ENCODE measurements at regions of chr1 and their contacts with region 1.

Region 1: DNA sequence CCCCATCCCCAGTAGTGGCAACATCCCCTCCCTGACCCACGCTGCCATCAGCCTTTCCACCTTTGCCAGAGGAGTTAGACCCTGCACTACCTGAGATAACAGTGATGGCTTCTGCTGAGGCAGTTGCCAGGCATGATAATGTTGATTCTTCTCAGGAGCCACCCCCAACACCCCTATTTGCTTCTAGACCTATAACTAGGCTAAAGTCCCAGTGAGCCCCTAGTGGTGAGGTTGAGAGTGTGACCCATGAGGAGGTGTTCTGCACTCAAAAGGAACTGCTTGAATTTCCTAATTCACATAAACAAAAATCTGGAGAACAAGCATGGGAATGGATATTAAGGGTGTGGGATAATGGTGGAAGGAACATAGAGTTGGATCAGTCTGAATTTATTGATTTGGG is 159.6 kb upstream of the COL11A1 start:
- DNase-seq: no peak
- H3K4me3 ChIP-seq: no peak overlapping the region
- H3K27ac ChIP-seq: no peak overlapping the region
- H3K4me1 ChIP-seq: peaks cover 0 to under 1% (median 0%) of the 10 kb centered on the region in 4 experiments; a peak in 1 of 7 replicates
- H3K27me3 ChIP-seq: no peaks in the 10 kb centered on the region
- CTCF ChIP-seq: peak in 2 of 3 experiments; percentile 35 to 64; a peak in 2 of 4 replicates
- EP300 ChIP-seq: no peak
- POLR2A ChIP-seq: no peak
- RAD21 ChIP-seq: peak; percentile 43 to 60

Region 2: DNA sequence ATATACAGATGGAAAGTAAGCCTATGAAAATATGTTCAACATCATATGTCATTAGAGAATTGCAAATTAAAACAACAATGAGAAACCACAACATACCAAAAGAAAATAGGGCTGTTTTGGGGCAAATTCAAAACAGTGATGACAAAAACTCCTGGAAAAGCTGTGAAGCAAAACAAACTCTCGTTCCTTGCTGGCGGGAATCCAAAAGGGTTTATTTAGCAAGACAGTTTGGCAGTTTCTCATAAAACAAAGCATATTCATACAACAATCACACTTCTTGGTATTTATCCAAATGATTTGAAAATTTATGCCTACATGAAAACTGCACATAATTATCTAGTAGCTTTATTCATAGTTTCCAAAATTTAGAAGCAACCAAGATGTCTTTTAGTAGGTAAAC is 204.0 kb before region 1 on chr1:
- CTCF ChIA-PET with region 1: no interaction called
- POLR2A ChIA-PET with region 1: no interaction called
- DNase-seq: no peak
- H3K4me3 ChIP-seq: no peak overlapping the region
- H3K27ac ChIP-seq: no peak overlapping the region
- H3K4me1 ChIP-seq: no peaks in the 10 kb centered on the region
- H3K27me3 ChIP-seq: no peaks in the 10 kb centered on the region
- CTCF ChIP-seq: no peak
- EP300 ChIP-seq: no peak
- POLR2A ChIP-seq: no peak
- RAD21 ChIP-seq: no peak

Region 3: DNA sequence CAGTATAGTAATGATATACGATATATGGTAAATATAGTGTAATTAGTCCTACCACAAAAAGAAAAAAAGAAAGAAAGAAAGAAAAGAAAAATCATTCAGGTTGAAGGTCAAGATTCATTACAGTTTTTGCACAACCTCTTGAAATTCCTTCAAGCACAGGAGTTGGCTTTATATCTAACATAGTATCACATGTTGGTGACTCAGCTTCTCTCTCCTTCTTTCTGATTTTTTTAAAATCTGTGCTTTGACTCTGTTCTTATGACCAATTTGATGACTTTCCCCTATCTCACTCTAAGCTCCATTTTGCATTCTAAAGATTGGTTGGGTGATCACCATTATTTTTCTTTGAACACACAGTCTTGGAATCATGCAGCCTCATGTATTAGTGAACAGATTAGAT is 11.4 kb before region 1 on chr1:
- CTCF ChIA-PET with region 1: interaction called, 23 read pairs
- POLR2A ChIA-PET with region 1: no interaction called
- DNase-seq: no peak
- H3K4me3 ChIP-seq: no peak overlapping the region
- H3K27ac ChIP-seq: no peak overlapping the region
- H3K4me1 ChIP-seq: no peaks in the 10 kb centered on the region
- H3K27me3 ChIP-seq: no peaks in the 10 kb centered on the region
- CTCF ChIP-seq: no peak
- EP300 ChIP-seq: no peak
- POLR2A ChIP-seq: no peak
- RAD21 ChIP-seq: no peak